ENCODE measurements at regions of chr1 and their contacts with region 1.

Region 1: DNA sequence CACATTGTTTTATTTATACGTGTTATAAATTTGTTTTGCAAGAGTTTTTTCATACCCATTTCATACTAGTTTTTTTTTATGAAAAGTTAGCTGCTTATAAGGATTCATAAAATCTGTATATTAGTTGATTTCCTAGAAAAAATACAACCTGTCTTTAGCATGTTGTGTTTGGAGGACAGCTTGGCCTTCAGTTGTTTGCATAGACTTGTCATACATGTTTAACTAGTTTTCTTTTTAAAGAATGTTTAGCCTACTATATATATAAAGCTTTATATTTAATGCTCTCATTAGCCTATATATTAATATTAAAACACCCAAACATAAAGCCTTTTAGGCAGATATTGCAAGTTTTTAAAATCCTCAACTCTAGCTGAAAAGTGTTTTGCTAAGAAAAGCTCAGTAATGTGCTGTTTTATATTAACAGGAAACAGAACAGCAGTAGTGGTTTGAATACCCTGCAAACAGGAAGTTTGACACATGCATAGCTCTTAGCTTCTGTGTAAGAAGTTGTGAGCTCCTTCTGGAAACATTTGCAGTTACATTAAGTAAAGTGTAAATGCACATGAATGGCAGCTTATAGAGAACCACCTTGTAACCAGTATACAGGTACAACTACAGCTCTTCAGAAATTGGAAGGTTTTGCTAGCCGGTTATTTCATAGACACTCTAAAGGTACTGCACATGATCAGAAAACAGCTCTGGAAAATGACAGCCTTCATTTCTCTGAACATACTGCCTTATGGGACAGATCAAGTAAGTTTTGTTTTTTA is at the start of gene PRKACB:
- DNase-seq: peak in 7 of 9 donors; percentile 59 to 79 (median 70)
- ATAC-seq: peak; percentile 94
- H3K4me3 ChIP-seq: peak within 1 kb of the TSS; percentile 71
- H3K4me3 Mint-ChIP-seq: peak within 1 kb of the TSS; percentile 88 to 100 (median 96)
- H3K27ac ChIP-seq: peak within 1 kb of the TSS; percentile 74
- H3K27ac Mint-ChIP-seq: peak within 1 kb of the TSS; percentile 97 to 100 (median 99)
- H3K4me1 ChIP-seq: peaks cover 27 to 33% of the 10 kb centered on the region in 2 donors
- H3K4me1 Mint-ChIP-seq: peaks cover 17 to 51% (median 39%) of the 10 kb centered on the region in 7 donors
- H3K27me3 ChIP-seq: no peaks in the 10 kb centered on the region
- H3K27me3 Mint-ChIP-seq: no peaks in the 10 kb centered on the region
- total RNA-seq, gene PRKACB: 71.1 to 176 (median 89.3) TPM

Region 2: GRCh38 chr1:84042461-84042860 is 101.5 kb before region 1 on chr1:
- CTCF ChIA-PET with region 1: no interaction called
- POLR2A ChIA-PET with region 1: no interaction called
- intact Hi-C with region 1: no loop called
- DNase-seq: no peak
- ATAC-seq: no peak
- H3K4me3 ChIP-seq: no peak overlapping the region
- H3K4me3 Mint-ChIP-seq: no peak overlapping the region
- H3K27ac ChIP-seq: no peak overlapping the region
- H3K27ac Mint-ChIP-seq: no peak overlapping the region
- H3K4me1 ChIP-seq: no peaks in the 10 kb centered on the region
- H3K4me1 Mint-ChIP-seq: peaks cover 0 to 2% (median 0%) of the 10 kb centered on the region in 7 donors
- H3K27me3 ChIP-seq: no peaks in the 10 kb centered on the region
- H3K27me3 Mint-ChIP-seq: peaks cover 0 to 17% (median 4%) of the 10 kb centered on the region in 5 donors

Region 3: GRCh38 chr1:84181350-84182005 is 37.5 kb after region 1 on chr1:
- CTCF ChIA-PET with region 1: interaction called, 6 read pairs
- POLR2A ChIA-PET with region 1: interaction called, 6 read pairs
- intact Hi-C with region 1: loop called (anchors 1 to 2 kb)
- DNase-seq: no peak
- ATAC-seq: no peak
- H3K4me3 ChIP-seq: no peak overlapping the region
- H3K4me3 Mint-ChIP-seq: no peak overlapping the region
- H3K27ac ChIP-seq: no peak overlapping the region
- H3K27ac Mint-ChIP-seq: peak overlapping the region in 4 of 9 donors; percentile 33 to 57 (median 38)
- H3K4me1 ChIP-seq: peaks cover 0 to 7% of the 10 kb centered on the region in 2 donors
- H3K4me1 Mint-ChIP-seq: peaks cover 2 to 44% (median 19%) of the 10 kb centered on the region in 7 donors
- H3K27me3 ChIP-seq: no peaks in the 10 kb centered on the region
- H3K27me3 Mint-ChIP-seq: no peaks in the 10 kb centered on the region

Region 4: GRCh38 chr1:84433258-84434080 is 289.5 kb after region 1 on chr1:
- CTCF ChIA-PET with region 1: interaction called, 167 read pairs
- POLR2A ChIA-PET with region 1: interaction called, 105 read pairs
- intact Hi-C with region 1: loop called (anchors 1 kb)
- DNase-seq: peak in 7 of 9 donors; percentile 71 to 85 (median 79)
- ATAC-seq: peak; percentile 92
- H3K4me3 ChIP-seq: peak overlapping the region; percentile 34
- H3K4me3 Mint-ChIP-seq: peak overlapping the region in 9 of 10 donors; percentile 29 to 82 (median 77)
- H3K27ac ChIP-seq: peak overlapping the region; percentile 73
- H3K27ac Mint-ChIP-seq: peak overlapping the region in 2 of 9 donors; percentile 85 to 90
- H3K4me1 ChIP-seq: peaks cover 23 to 41% of the 10 kb centered on the region in 2 donors
- H3K4me1 Mint-ChIP-seq: peaks cover 0 to 12% (median 9%) of the 10 kb centered on the region in 7 donors
- H3K27me3 ChIP-seq: no peaks in the 10 kb centered on the region
- H3K27me3 Mint-ChIP-seq: no peaks in the 10 kb centered on the region

Region 5: GRCh38 chr1:84541679-84542078 is 397.7 kb after region 1 on chr1:
- CTCF ChIA-PET with region 1: no interaction called
- POLR2A ChIA-PET with region 1: no interaction called
- intact Hi-C with region 1: loop called in 1 of 2 experiments (anchors 1 kb)
- DNase-seq: peak in 2 of 9 donors; percentile 2 to 9
- ATAC-seq: no peak
- H3K4me3 ChIP-seq: no peak overlapping the region
- H3K4me3 Mint-ChIP-seq: no peak overlapping the region
- H3K27ac ChIP-seq: no peak overlapping the region
- H3K27ac Mint-ChIP-seq: peak overlapping the region in 1 of 9 donors; percentile 6
- H3K4me1 ChIP-seq: no peaks in the 10 kb centered on the region
- H3K4me1 Mint-ChIP-seq: peaks cover 0 to 26% (median 0%) of the 10 kb centered on the region in 7 donors
- H3K27me3 ChIP-seq: no peaks in the 10 kb centered on the region
- H3K27me3 Mint-ChIP-seq: no peaks in the 10 kb centered on the region

Region 6: GRCh38 chr1:84753516-84754385 is 609.8 kb after region 1 on chr1:
- CTCF ChIA-PET with region 1: interaction called, 15 read pairs
- POLR2A ChIA-PET with region 1: interaction called, 4 read pairs
- intact Hi-C with region 1: loop called (anchors 1 kb)
- DNase-seq: peak; percentile 47 to 77 (median 67)
- ATAC-seq: peak; percentile 93
- H3K4me3 ChIP-seq: no peak overlapping the region
- H3K4me3 Mint-ChIP-seq: no peak overlapping the region
- H3K27ac ChIP-seq: no peak overlapping the region
- H3K27ac Mint-ChIP-seq: peak overlapping the region in 1 of 9 donors; percentile 29
- H3K4me1 ChIP-seq: no peaks in the 10 kb centered on the region
- H3K4me1 Mint-ChIP-seq: peaks cover 0 to 7% (median 3%) of the 10 kb centered on the region in 7 donors
- H3K27me3 ChIP-seq: no peaks in the 10 kb centered on the region
- H3K27me3 Mint-ChIP-seq: peaks cover 9 to 26% (median 18%) of the 10 kb centered on the region in 5 donors

Region 7: GRCh38 chr1:85259118-85259911 is 1115.3 kb after region 1 on chr1 and contains the start of gene C1orf52:
- CTCF ChIA-PET with region 1: no interaction called
- POLR2A ChIA-PET with region 1: interaction called, 4 read pairs
- intact Hi-C with region 1: loop called in 1 of 2 experiments (anchors 1 kb)
- DNase-seq: peak; percentile 92 to 99 (median 96)
- ATAC-seq: peak; percentile 99
- H3K4me3 ChIP-seq: peak within 1 kb of the TSS; percentile 83
- H3K4me3 Mint-ChIP-seq: peak within 1 kb of the TSS; percentile 93 to 99 (median 98)
- H3K27ac ChIP-seq: peak within 1 kb of the TSS; percentile 90
- H3K27ac Mint-ChIP-seq: peak within 1 kb of the TSS; percentile 91 to 98 (median 96)
- H3K4me1 ChIP-seq: peaks cover 14 to 16% of the 10 kb centered on the region in 2 donors
- H3K4me1 Mint-ChIP-seq: peaks cover 19 to 52% (median 45%) of the 10 kb centered on the region in 7 donors
- H3K27me3 ChIP-seq: no peaks in the 10 kb centered on the region
- H3K27me3 Mint-ChIP-seq: no peaks in the 10 kb centered on the region
- total RNA-seq, gene C1orf52: 25.7 to 55.4 (median 46.1) TPM